ENCODE measurements at regions of chrX and their contacts with region 1.

Region 1: GRCh38 chrX:71254092-71254941 is at the start of gene ZMYM3:
- DNase-seq: peak; percentile 93
- H3K4me3 ChIP-seq: peak within 1 kb of the TSS; percentile 65 to 80 (median 68)
- H3K27ac ChIP-seq: peak within 1 kb of the TSS; percentile 85 to 91 (median 89)
- H3K4me1 ChIP-seq: peaks cover 6 to 26% (median 21%) of the 10 kb centered on the region in 4 donors
- H3K27me3 ChIP-seq: no peaks in the 10 kb centered on the region
- CTCF ChIP-seq: peak in 1 of 3 experiments; percentile 14
- EP300 ChIP-seq: no peak
- POLR2A ChIP-seq: no peak
- total RNA-seq, gene ZMYM3: 9.9 to 19.0 (median 16.8) TPM

Region 2: DNA sequence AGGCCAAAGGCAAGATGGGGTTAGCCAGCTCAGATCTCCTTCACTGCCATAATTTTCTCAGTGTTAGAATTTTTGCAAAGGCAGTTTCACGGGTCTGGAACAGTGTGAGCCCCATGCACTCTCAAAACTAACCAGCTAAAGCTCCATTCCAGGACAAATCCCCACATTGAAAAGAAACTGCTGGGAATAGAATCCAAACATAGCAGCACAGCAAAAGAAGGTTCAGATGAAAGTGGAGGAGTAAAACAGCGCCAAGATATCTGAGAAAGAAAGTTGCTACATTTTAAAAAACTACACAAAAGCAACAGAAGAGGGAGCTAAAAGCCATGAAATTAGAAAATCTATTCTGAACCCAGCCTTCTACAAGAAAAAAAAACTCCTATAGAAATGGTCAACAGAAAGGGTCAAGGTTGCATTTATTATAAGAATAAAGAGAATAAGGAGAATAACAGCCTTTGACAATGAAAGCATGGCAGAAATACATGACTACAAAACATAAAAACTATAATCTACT is 283.8 kb before region 1 on chrX:
- intact Hi-C with region 1: no loop called
- DNase-seq: no peak
- H3K4me3 ChIP-seq: no peak overlapping the region
- H3K27ac ChIP-seq: no peak overlapping the region
- H3K4me1 ChIP-seq: no peaks in the 10 kb centered on the region
- H3K27me3 ChIP-seq: no peaks in the 10 kb centered on the region
- CTCF ChIP-seq: peak; percentile 22 to 30 (median 29)
- EP300 ChIP-seq: no peak
- POLR2A ChIP-seq: no peak

Region 3: GRCh38 chrX:71103110-71103983 is 151.0 kb before region 1 on chrX:
- intact Hi-C with region 1: no loop called
- DNase-seq: no peak
- H3K4me3 ChIP-seq: no peak overlapping the region
- H3K27ac ChIP-seq: peak overlapping the region in 1 of 4 donors; percentile 14
- H3K4me1 ChIP-seq: peaks cover 0 to 19% (median 12%) of the 10 kb centered on the region in 4 donors
- H3K27me3 ChIP-seq: peaks cover 0 to 6% (median 0%) of the 10 kb centered on the region in 4 donors
- CTCF ChIP-seq: no peak
- EP300 ChIP-seq: no peak
- POLR2A ChIP-seq: no peak

Region 4: DNA sequence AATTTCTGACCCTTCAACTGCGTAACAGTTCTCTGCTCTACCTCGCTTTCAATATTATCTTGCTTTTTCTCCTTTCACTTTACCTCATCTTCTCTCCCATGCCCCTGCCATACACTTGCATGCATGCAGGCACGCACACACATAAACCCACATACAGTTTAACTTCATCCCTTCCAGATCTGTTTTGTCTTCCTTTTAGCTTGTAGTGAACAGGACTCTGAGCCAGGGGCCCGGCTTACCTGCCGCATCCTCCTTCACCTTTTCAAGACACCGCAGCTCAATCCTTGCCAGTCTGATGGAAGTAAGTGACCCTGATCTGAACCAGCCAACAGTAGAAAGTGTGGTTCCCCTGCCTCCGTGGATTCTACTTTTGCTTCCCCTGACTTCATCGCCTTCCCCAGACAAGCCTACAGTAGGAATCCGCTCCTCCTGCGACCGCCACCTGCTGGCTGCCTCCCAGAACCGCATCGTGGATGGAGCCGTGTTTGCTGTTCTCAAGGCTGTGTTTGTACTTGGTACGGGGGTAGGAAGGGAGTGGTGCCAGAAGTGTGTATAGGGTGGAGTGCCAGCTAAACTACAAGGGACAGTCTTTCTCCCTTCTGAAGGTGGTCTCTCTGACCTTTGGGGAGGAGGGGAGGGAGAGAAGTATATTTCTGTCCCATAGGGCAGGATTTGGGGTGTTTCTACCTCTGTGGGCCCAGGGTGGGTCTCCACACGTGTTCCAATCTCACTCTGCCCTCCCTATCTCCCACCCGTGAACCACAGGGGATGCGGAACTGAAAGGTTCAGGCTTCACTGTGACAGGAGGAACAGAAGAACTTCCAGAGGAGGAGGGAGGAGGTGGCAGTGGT is 125.2 kb before region 1 on chrX:
- intact Hi-C with region 1: loop called (anchors 10 kb)
- DNase-seq: no peak
- H3K4me3 ChIP-seq: no peak overlapping the region
- H3K27ac ChIP-seq: no peak overlapping the region
- H3K4me1 ChIP-seq: peaks cover 0 to 8% (median 2%) of the 10 kb centered on the region in 4 donors
- H3K27me3 ChIP-seq: no peaks in the 10 kb centered on the region
- CTCF ChIP-seq: peak; percentile 57 to 70 (median 59)
- EP300 ChIP-seq: no peak
- POLR2A ChIP-seq: no peak

Region 5: DNA sequence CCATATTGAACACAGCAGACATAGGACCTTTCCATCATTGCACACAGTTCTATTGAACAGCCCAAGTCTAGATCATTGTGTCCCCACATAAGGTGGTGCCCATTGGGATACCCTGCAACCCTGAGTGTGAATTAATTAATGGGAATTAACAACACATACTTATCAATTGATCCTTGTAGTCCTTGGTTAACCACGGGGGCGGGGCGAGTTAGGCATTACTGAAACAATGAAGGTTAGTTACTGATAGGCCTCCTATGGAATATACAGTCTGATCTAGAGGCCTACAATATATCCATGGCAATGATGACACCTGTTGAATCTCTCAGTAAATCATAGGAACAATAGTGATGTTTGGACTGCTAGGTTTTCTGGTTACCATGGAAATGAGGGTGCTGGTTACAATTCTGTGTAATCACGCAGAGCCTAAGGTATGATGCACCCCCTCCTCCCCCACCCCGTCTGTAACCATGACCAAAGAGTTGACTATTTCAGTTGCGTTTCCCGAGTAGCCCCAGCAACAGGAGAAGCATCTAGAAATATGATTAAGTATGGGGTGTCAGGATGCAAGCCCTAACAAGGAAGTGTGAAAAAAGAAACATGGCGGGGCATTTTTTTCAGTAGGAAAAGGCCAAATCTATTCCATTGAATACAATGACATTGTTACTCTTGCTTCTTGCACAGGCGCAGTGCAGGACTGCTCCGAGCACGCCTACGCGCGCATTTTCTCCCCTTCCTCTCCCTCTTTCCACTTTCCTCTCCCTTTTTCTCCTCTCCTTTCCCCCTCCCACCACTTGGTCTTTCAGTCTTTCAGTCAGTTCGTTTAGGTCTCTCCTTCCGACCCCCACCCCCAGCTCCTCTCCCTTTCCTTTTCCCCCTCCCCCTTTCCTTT is 28.4 kb after region 1 on chrX:
- intact Hi-C with region 1: loop called (anchors 1 kb)
- DNase-seq: no peak
- H3K4me3 ChIP-seq: peak overlapping the region; percentile 57 to 72 (median 64)
- H3K27ac ChIP-seq: peak overlapping the region; percentile 76 to 93 (median 85)
- H3K4me1 ChIP-seq: peaks cover 12 to 32% (median 32%) of the 10 kb centered on the region in 4 donors
- H3K27me3 ChIP-seq: no peaks in the 10 kb centered on the region
- CTCF ChIP-seq: no peak
- EP300 ChIP-seq: no peak
- POLR2A ChIP-seq: no peak

Region 6: GRCh38 chrX:71365876-71366673 is 111.8 kb after region 1 on chrX and contains the start of gene TAF1:
- intact Hi-C with region 1: loop called (anchors 10 kb)
- DNase-seq: peak; percentile 98
- H3K4me3 ChIP-seq: peak within 1 kb of the TSS; percentile 61 to 78 (median 68)
- H3K27ac ChIP-seq: peak within 1 kb of the TSS; percentile 81 to 94 (median 90)
- H3K4me1 ChIP-seq: peaks cover 0 to 32% (median 16%) of the 10 kb centered on the region in 4 donors
- H3K27me3 ChIP-seq: no peaks in the 10 kb centered on the region
- CTCF ChIP-seq: no peak
- EP300 ChIP-seq: no peak
- POLR2A ChIP-seq: peak; percentile 78
- total RNA-seq, gene TAF1: 34.3 to 59.4 (median 41.4) TPM

Region 7: DNA sequence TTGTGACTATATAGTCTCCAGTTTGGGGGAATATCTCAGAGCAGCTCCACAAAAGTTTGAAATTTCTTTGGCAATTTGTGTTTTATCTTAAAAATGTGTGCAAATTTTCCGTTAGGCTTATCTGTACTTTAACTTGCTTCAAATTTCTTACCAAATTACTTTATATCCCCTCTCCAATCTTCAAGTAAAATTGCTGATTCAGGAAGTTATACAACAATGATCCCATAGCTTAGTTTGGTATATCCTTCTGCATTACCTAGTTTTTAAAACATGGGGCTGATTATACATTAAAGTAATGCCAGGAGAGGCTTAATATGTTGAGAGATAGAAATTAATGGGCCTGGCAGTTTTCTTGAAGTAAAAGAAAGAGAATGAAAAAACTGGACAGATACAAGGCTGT is 178.4 kb after region 1 on chrX:
- intact Hi-C with region 1: no loop called
- DNase-seq: no peak
- H3K4me3 ChIP-seq: no peak overlapping the region
- H3K27ac ChIP-seq: no peak overlapping the region
- H3K4me1 ChIP-seq: no peaks in the 10 kb centered on the region
- H3K27me3 ChIP-seq: no peaks in the 10 kb centered on the region
- CTCF ChIP-seq: no peak
- EP300 ChIP-seq: no peak
- POLR2A ChIP-seq: no peak

Measured in esophagus muscularis mucosa (tissue), 4 donors.